HepG2 (cell line): ENCODE measurements at regions of chr5 and their contacts with region 1.

Region 1: GRCh38 chr5:91311697-91312501 is 71.2 kb downstream of the ARRDC3 start:
- DNase-seq: peak; percentile 31
- ATAC-seq: no peak
- H3K4me3 ChIP-seq: no peak overlapping the region
- H3K27ac ChIP-seq: no peak overlapping the region
- H3K4me1 ChIP-seq: peaks cover 37% of the 10 kb centered on the region
- H3K27me3 ChIP-seq: no peaks in the 10 kb centered on the region
- CTCF ChIP-seq: no peak
- EP300 ChIP-seq: no peak
- POLR2A ChIP-seq: no peak
- RAD21 ChIP-seq: no peak

Region 2: GRCh38 chr5:91024727-91025126 is 287.2 kb before region 1 on chr5:
- CTCF ChIA-PET with region 1: no interaction called
- POLR2A ChIA-PET with region 1: no interaction called
- in situ Hi-C with region 1: no loop called
- intact Hi-C with region 1: loop called (anchors 5 kb)
- DNase-seq: no peak
- ATAC-seq: no peak
- H3K4me3 ChIP-seq: no peak overlapping the region
- H3K27ac ChIP-seq: no peak overlapping the region
- H3K4me1 ChIP-seq: peaks cover 37% of the 10 kb centered on the region
- H3K27me3 ChIP-seq: no peaks in the 10 kb centered on the region
- CTCF ChIP-seq: no peak
- EP300 ChIP-seq: no peak
- POLR2A ChIP-seq: no peak
- RAD21 ChIP-seq: no peak

Region 3: DNA sequence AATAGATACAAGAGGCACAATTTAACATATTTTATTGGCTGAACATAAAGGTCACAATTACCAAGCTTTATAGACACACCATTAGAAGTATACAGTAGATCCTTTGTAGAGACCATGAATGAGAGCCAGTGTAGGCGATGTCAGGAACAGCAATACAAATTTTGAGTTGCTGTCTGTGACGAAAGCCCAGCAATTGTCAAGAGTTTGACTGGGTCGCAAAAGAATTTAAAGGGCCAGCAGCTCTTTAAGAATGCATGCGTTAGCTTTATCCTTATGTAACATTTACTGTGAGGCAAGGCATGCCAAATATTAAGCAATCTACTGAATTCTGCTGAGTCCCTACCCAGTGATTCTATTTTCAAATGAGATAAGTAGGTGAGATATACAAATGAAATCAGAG is 165.7 kb before region 1 on chr5:
- CTCF ChIA-PET with region 1: no interaction called
- POLR2A ChIA-PET with region 1: no interaction called
- in situ Hi-C with region 1: no loop called
- intact Hi-C with region 1: no loop called
- DNase-seq: no peak
- ATAC-seq: no peak
- H3K4me3 ChIP-seq: no peak overlapping the region
- H3K27ac ChIP-seq: no peak overlapping the region
- H3K4me1 ChIP-seq: no peaks in the 10 kb centered on the region
- H3K27me3 ChIP-seq: peaks cover 0 to 4% of the 10 kb centered on the region in 2 experiments; a peak in 2 of 5 replicates
- CTCF ChIP-seq: no peak
- EP300 ChIP-seq: no peak
- POLR2A ChIP-seq: no peak
- RAD21 ChIP-seq: no peak

Region 4: GRCh38 chr5:91950328-91950727 is 638.4 kb after region 1 on chr5:
- CTCF ChIA-PET with region 1: no interaction called
- POLR2A ChIA-PET with region 1: no interaction called
- in situ Hi-C with region 1: no loop called
- intact Hi-C with region 1: loop called (anchors 5 kb)
- DNase-seq: no peak
- ATAC-seq: no peak
- H3K4me3 ChIP-seq: no peak overlapping the region
- H3K27ac ChIP-seq: no peak overlapping the region
- H3K4me1 ChIP-seq: no peaks in the 10 kb centered on the region
- H3K27me3 ChIP-seq: no peaks in the 10 kb centered on the region
- CTCF ChIP-seq: no peak
- EP300 ChIP-seq: no peak
- POLR2A ChIP-seq: no peak
- RAD21 ChIP-seq: no peak